AG04449 (cell line): ENCODE measurements at regions of chr3 and their contacts with region 1.

Region 1: DNA sequence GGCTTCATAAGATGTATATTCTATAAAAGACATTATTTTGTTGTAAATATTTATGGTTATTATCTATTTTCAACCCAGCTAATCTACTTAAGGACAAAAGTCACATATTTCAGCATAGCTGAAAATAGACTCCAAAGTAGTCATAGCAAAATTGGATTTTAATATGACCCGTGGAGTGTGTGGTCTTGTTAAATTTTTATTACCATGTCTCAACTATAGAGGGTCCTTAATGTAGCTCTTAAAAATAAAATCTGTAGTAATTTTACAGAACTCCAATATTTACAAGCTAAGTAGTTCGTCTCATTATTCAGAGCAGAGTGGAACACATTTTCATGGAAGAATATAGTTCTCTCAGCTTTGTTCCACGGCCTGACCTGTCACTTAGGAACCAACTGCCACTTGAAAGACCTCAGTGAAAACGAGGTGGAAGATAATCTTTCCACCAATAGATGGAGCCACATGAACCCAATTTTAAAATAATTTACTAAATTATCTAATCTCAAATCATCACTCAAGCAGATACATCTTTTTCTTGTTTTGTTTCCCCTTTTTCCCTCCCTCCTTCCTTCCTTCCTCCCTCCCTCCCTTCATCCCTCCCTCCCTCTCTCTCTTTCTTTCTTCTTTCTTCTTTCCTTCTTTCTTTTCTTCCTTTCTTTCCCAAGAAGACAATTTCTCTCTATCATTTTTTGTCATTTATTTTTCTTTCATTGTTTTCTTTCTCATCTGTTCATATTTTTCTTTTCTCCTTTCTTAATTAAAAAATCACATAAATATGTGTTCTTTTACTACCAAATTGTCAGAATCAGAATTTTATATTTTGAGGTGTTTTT is 97.2 kb downstream of the CLDN1 start:
- DNase-seq: no peak
- H3K4me3 ChIP-seq: no peak overlapping the region
- CTCF ChIP-seq: peak; percentile 12

Region 2: GRCh38 chr3:189288348-189289235 is 936.5 kb before region 1 on chr3:
- CTCF ChIA-PET with region 1: no interaction called
- POLR2A ChIA-PET with region 1: no interaction called
- DNase-seq: no peak
- H3K4me3 ChIP-seq: no peak overlapping the region
- CTCF ChIP-seq: no peak

Region 3: DNA sequence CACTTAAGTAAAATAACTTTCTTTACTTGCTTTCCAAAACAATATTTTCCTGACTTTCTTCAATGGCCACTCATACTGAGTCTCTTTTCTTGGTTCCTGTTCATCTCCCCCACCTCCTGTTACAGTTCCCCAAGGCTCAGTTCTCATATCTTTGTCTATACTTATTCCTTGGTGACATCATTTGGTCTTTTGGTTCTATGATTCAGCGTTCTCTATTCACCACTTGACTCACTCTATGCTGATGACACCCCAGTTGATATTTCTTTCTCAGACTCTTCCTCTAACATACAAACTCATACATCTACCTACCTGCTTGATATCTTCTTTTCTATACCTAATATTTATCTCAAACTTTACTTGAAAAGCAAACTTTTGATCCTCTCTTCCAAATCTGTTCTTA is 19.3 kb before region 1 on chr3:
- CTCF ChIA-PET with region 1: interaction called, 35 read pairs
- POLR2A ChIA-PET with region 1: no interaction called
- DNase-seq: no peak
- H3K4me3 ChIP-seq: no peak overlapping the region
- CTCF ChIP-seq: no peak

Region 4: GRCh38 chr3:190265796-190266195 is 40.7 kb after region 1 on chr3:
- CTCF ChIA-PET with region 1: interaction called, 10 read pairs
- POLR2A ChIA-PET with region 1: no interaction called
- DNase-seq: peak; percentile 61
- H3K4me3 ChIP-seq: no peak overlapping the region
- CTCF ChIP-seq: no peak

Region 5: GRCh38 chr3:190384241-190384863 is 159.3 kb after region 1 on chr3:
- CTCF ChIA-PET with region 1: interaction called, 41 read pairs
- POLR2A ChIA-PET with region 1: no interaction called
- DNase-seq: no peak
- H3K4me3 ChIP-seq: no peak overlapping the region
- CTCF ChIP-seq: peak; percentile 43

Region 6: DNA sequence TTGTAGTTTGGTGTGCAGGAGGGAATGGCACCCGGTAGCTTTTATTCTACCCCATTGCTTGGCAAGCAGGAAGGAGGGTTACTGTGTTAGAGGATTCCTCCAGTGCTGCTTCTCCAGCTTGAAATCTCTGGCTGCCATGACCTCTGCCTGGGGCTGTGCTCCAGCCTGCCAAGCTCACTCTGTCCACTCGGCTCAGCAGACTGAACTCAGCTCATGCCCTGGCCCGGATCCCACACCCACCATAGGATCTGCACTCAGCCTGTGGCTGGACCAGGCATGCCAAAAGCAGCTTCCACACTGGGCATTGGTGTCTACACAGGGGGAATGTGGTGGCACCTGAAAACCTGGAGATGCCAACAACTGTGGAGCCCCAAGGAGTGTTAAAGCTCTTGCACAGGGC is 189.2 kb after region 1 on chr3:
- CTCF ChIA-PET with region 1: interaction called, 12 read pairs
- POLR2A ChIA-PET with region 1: no interaction called
- DNase-seq: no peak
- H3K4me3 ChIP-seq: no peak overlapping the region
- CTCF ChIP-seq: no peak

Region 7: DNA sequence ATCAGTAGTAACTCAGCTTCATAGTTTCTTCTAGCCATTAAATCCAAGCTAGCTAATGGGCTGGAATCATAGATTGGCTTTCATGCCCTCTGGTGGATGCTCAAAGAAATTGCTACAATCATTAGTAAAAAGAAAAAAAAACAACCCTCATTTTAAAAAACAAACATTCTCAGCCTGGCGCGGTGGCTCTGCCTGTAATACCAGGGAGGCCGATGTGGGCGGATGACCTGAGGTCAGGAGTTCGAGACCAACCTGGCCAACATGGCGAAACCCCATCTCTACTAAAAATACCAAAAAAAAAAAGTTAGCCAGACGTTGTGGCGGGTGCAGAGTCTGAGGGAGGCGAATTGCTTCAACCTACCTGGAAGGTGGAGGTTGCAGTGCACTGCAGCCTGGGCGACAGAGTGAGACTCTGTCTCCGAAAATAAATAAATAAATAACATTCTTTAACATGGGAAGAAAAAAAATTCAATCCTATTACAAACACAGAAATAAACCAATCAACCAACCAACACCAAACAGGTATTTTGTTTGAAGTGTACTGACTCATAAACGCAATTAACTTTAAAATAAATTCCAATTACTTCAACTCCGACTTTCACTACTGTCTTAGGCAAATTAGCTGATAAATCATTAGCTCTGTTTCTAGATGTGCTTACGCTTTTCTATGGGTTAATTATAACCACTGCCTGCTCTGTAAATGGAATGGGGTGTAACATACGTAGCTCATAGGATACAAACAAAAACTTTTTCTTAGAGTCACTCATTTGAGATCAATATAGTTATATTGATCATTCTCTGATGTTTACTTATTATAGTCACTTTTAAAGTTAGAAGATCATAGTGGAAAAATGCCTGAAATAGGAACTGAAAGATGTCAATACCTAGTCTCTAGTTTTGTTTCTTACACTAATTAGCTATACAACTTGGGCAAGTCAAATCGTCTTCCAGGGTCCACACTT is 199.7 kb after region 1 on chr3:
- CTCF ChIA-PET with region 1: interaction called, 154 read pairs
- POLR2A ChIA-PET with region 1: no interaction called
- DNase-seq: no peak
- H3K4me3 ChIP-seq: no peak overlapping the region
- CTCF ChIP-seq: peak; percentile 54

Region 8: DNA sequence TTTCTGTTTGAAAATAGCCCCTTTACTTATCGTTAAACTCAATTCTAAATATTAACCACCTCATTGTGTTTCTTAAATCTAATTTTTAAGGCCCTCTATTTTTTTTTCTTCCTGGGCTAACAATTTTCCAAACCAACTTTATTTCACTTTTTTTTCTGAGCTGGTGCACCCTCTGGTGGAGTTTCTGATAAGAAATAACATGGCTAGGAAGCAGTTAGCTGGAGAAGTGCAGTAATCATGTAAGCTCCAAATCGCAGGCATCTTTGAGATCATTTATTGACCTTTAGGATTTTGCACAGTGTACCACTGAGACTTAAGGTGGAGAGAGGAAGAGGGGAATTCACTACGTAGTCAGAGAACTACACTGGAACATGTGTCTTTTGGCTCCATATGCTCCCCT is 218.2 kb after region 1 on chr3:
- CTCF ChIA-PET with region 1: interaction called, 52 read pairs
- POLR2A ChIA-PET with region 1: no interaction called
- DNase-seq: no peak
- H3K4me3 ChIP-seq: no peak overlapping the region
- CTCF ChIP-seq: peak; percentile 32